AG04450 (cell line): ENCODE measurements at regions of chr3 and their contacts with region 1.

Region 1: DNA sequence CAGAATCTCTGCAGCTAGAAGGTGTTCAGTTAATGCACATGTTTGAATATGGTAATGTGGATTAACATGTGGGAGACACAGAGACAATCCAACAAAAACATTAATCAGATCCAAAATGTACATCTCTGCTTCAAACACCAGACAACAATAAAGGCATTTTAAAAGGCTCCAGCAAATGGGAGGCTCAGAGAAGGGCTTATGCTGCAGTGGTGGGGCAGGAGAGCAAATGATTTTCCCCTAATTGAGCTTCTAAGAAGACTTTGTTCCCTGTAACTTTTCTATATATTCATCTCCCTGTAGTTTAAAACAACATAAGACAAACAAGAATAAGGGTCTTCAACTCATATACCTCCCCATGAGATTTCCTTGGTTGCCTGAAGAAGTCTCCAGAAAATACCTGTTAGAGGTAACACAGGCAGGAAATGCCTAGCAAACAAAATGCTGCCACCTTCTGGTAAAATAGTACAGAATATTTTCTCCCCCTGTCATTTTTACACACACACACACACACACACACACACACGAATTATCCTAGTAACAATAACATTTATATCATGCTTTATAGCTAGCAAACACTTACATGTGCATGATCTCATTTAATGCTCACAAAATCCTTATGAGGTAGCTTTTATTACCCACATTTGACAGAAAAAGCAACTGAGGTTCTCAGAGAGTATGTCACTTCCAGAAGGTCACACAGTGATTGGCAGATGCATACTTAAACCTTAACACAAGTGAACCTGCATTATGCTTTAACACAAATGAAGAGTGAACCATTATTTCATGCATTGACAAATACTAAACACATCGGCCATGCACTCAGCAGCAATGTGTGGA is 123.4 kb upstream of the MB21D2 start:
- DNase-seq: peak; percentile 13
- H3K4me3 ChIP-seq: no peak overlapping the region
- H3K27ac ChIP-seq: no peak overlapping the region
- H3K27me3 ChIP-seq: peaks cover 4% of the 10 kb centered on the region
- CTCF ChIP-seq: peak; percentile 59

Region 2: GRCh38 chr3:192758654-192759053 is 282.4 kb before region 1 on chr3:
- CTCF ChIA-PET with region 1: no interaction called
- POLR2A ChIA-PET with region 1: no interaction called
- DNase-seq: no peak
- H3K4me3 ChIP-seq: no peak overlapping the region
- H3K27ac ChIP-seq: no peak overlapping the region
- H3K27me3 ChIP-seq: no peaks in the 10 kb centered on the region
- CTCF ChIP-seq: no peak

Region 3: GRCh38 chr3:192825657-192826200 is 215.3 kb before region 1 on chr3:
- CTCF ChIA-PET with region 1: interaction called, 14 read pairs
- POLR2A ChIA-PET with region 1: no interaction called
- DNase-seq: no peak
- H3K4me3 ChIP-seq: no peak overlapping the region
- H3K27ac ChIP-seq: no peak overlapping the region
- H3K27me3 ChIP-seq: no peaks in the 10 kb centered on the region
- CTCF ChIP-seq: peak; percentile 35

Region 4: GRCh38 chr3:192957441-192958021 is 83.5 kb before region 1 on chr3:
- CTCF ChIA-PET with region 1: interaction called, 11 read pairs
- POLR2A ChIA-PET with region 1: no interaction called
- DNase-seq: peak; percentile 76
- H3K4me3 ChIP-seq: peak overlapping the region; percentile 58
- H3K27ac ChIP-seq: peak overlapping the region; percentile 96
- H3K27me3 ChIP-seq: no peaks in the 10 kb centered on the region
- CTCF ChIP-seq: no peak

Region 5: GRCh38 chr3:193023218-193023617 is 17.8 kb before region 1 on chr3:
- CTCF ChIA-PET with region 1: interaction called, 21 read pairs
- POLR2A ChIA-PET with region 1: no interaction called
- DNase-seq: no peak
- H3K4me3 ChIP-seq: no peak overlapping the region
- H3K27ac ChIP-seq: no peak overlapping the region
- H3K27me3 ChIP-seq: no peaks in the 10 kb centered on the region
- CTCF ChIP-seq: no peak

Region 6: GRCh38 chr3:193052354-193053045 is 11.4 kb after region 1 on chr3:
- CTCF ChIA-PET with region 1: interaction called, 14 read pairs
- POLR2A ChIA-PET with region 1: no interaction called
- DNase-seq: no peak
- H3K4me3 ChIP-seq: no peak overlapping the region
- H3K27ac ChIP-seq: no peak overlapping the region
- H3K27me3 ChIP-seq: peaks cover 7% of the 10 kb centered on the region
- CTCF ChIP-seq: no peak

Region 7: DNA sequence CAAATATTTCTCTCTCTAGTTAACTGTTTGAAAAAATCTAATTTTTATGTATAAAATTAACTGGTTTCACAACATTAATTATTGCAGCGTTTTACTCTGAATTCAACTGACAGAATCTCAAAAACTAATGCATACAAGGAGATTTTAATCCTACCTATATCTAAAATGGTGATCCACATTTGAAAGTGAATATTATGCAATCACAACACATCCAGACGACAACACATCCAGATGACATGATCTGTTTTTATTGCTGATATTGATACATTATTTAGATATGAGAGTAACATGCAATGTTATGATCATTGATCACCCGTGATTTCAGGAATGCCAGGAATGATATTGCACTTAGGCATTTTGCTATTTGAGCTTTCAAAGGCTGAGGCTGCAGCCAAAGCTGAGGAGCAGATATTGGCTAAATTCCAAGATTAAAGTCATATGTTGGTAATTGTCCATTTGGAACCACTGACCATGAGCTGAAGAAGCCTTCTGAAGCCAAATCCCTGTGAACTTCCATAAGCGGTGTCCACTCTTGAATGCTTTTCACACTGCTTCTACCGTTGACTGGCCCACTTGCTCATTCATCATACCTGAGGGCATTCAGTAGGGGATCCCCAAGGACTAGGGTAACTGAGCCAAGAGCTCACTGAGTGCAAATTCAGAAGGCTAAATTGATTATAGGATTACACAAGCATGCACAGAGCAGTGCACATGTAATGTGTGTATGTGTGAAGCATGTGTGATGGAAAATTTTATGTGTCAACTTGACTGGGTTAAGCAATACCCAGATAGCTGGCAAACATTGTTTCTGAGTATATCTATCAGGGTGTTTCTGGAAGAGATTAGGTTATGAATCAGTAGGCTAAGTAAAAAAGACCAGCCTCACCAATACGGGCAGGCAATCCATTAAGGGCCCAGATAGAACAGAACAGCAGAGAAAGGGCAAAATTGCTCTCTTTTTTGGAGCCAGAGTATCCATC is 107.7 kb after region 1 on chr3:
- CTCF ChIA-PET with region 1: no interaction called
- POLR2A ChIA-PET with region 1: no interaction called
- DNase-seq: no peak
- H3K4me3 ChIP-seq: no peak overlapping the region
- H3K27ac ChIP-seq: no peak overlapping the region
- H3K27me3 ChIP-seq: no peaks in the 10 kb centered on the region
- CTCF ChIP-seq: no peak